Calu3 (cell line): ENCODE measurements at regions of chr2 and their contacts with region 1.

Region 1: GRCh38 chr2:235779444-235779896 is 285.6 kb downstream of the AGAP1 start:
- DNase-seq: peak; percentile 87
- H3K4me3 Mint-ChIP-seq: no peak overlapping the region
- H3K27ac Mint-ChIP-seq: no peak overlapping the region
- H3K4me1 Mint-ChIP-seq: no peaks in the 10 kb centered on the region
- H3K27me3 Mint-ChIP-seq: no peaks in the 10 kb centered on the region
- CTCF ChIP-seq: peak; percentile 80

Region 2: GRCh38 chr2:235766278-235766677 is 13.2 kb before region 1 on chr2:
- CTCF ChIA-PET with region 1: interaction called, 10 read pairs
- intact Hi-C with region 1: no loop called
- DNase-seq: peak; percentile 58
- H3K4me3 Mint-ChIP-seq: no peak overlapping the region
- H3K27ac Mint-ChIP-seq: peak overlapping the region; percentile 19
- H3K4me1 Mint-ChIP-seq: peaks cover 8% of the 10 kb centered on the region
- H3K27me3 Mint-ChIP-seq: no peaks in the 10 kb centered on the region
- CTCF ChIP-seq: peak; percentile 90